Colonic mucosa (tissue), 4 donors: ENCODE measurements at regions of chr2 and their contacts with region 1.

Region 1: DNA sequence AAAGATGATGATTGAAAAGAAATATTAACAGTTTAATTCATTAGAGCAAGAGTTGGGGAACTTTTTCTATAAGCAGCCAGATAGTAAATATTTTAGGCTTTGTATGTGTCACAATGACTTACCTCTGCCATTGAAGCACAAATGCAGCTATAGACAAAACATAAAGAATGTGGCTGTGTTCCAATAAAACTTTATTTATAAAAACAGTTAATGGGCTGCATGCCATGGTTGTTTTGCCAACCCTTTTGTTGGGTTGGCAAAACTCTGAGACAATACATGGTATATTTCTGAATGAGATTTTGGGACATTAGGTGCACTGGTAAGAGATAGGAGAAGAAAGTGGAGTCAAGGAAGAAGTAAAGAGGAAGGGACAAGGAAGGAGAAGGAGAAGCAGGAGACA is 61.8 kb upstream of the CERS6 start:
- DNase-seq: no peak
- H3K4me3 ChIP-seq: no peak overlapping the region
- H3K27ac ChIP-seq: no peak overlapping the region
- H3K4me1 ChIP-seq: no peaks in the 10 kb centered on the region
- H3K27me3 ChIP-seq: no peaks in the 10 kb centered on the region
- CTCF ChIP-seq: no peak

Region 2: DNA sequence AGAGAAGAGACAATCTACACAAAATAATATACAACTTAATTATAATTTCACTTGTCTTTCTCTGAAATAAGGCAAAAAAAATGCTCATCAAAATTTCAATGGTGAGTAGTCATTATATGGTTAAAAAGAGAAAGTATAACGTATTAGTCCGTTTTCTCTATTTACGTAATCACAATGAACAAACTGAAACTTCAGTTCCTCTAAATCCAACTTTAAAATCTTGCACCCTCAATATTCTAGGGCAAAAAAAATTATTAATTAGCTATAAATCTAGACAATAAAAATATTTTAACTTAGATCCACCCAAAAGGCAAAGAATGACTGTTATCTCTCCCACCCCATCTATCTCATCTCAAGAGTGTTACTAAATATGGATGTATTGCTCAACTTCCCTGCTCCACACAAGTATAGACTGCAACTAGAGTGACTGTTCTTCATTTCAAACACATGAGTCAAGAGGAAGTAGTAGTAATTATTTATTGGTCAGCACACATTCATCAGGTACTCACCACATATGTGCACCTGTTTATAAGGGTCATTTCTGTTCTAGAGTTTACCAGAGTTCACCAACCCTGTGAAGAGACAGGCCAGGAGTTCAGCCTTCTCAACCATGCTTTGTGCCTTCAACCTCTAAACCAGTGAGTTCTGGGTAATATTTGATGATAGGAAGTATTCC is 183.2 kb before region 1 on chr2:
- intact Hi-C with region 1: no loop called
- DNase-seq: no peak
- H3K4me3 ChIP-seq: no peak overlapping the region
- H3K27ac ChIP-seq: peak overlapping the region; percentile 56
- H3K4me1 ChIP-seq: peaks cover 4% of the 10 kb centered on the region
- H3K27me3 ChIP-seq: no peaks in the 10 kb centered on the region
- CTCF ChIP-seq: no peak

Region 3: DNA sequence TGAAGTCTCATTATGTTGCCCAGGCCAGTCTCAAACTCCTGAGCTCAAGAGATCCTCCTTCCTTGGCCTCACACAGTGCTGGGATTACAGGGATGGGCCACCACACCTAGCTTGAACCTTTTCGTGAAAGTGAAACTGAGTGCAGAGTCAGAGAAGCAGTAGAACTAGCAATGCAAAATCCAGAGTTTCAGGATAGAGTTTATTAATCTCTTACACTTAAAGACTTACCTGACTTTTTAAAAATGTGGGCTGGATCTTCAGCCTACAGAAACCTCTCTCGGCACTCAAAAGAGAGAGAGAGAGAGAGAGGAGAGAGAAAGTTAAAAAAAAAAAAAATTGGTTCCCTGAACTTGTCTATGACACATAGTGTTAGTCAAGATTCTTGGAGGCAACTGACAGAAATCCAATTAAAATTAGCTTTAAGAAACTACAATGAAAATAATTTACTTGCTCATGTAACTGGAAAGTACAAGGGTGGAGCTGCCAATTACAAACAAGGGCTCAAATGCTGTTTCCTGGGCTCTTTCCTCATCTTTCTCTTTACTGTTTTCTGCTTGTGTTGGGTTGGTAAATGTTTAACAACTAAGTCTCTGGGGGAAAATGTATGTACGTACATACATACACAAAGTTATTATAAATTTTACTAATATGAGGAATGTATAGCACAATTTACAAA is 36.3 kb before region 1 on chr2:
- intact Hi-C with region 1: loop called (anchors 2 kb)
- DNase-seq: peak; percentile 45
- H3K4me3 ChIP-seq: no peak overlapping the region
- H3K27ac ChIP-seq: peak overlapping the region; percentile 8
- H3K4me1 ChIP-seq: no peaks in the 10 kb centered on the region
- H3K27me3 ChIP-seq: no peaks in the 10 kb centered on the region
- CTCF ChIP-seq: no peak